ENCODE measurements at regions of chr7 and their contacts with region 1.

Region 1: DNA sequence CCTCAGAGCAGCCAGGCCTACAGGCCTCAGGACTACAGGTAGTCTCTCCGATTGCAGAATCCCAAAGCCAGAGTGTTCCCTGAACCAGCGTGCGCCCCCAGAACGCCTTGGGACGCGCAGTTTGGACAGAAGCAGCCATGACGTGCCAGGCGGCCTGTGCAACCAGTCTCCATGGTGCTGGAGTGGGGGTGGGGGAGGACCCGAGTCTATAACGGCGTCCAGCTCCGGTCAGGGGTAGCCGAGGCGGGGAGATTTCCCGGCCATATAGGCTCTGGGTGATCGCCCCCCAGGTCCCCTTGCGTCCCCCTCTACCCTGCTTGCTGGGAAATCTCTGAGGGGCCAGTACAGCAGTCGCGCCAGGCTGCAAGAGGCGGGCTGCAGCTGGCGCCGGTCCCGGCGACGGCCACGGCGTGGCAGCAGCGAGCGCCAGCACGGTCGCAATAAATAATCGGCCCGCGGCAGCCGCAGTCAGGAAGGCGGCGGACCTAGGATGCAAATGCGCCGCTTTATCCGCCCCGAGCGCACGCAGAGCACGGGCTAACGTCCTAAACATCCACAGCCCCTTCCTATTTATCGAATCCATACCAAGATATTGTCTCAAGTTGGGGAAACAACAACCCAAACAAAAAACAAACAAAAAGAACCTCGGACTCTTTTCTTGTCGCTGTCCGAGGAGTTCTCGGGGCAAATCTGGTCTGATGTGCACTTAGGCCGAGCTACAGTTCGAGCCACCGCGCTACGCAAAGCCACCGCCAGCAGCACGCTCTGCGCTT is 1.6 kb downstream of the HOXA3 start:
- DNase-seq: peak; percentile 72 to 87 (median 87)
- ATAC-seq: peak; percentile 75 to 83
- H3K4me3 ChIP-seq: peak overlapping the region; percentile 5
- H3K27ac ChIP-seq: no peak overlapping the region
- H3K4me1 ChIP-seq: peaks cover 5% of the 10 kb centered on the region
- H3K27me3 ChIP-seq: no peaks in the 10 kb centered on the region

Region 2: GRCh38 chr7:25877802-25878789 is 1272.7 kb before region 1 on chr7:
- intact Hi-C with region 1: loop called in 1 of 4 experiments (anchors 10 kb)
- DNase-seq: no peak
- ATAC-seq: no peak
- H3K4me3 ChIP-seq: no peak overlapping the region
- H3K27ac ChIP-seq: no peak overlapping the region
- H3K4me1 ChIP-seq: no peaks in the 10 kb centered on the region
- H3K27me3 ChIP-seq: peaks cover 6% of the 10 kb centered on the region

Region 3: GRCh38 chr7:26376175-26376917 is 774.4 kb before region 1 on chr7:
- intact Hi-C with region 1: loop called in 1 of 4 experiments (anchors 10 kb)
- DNase-seq: peak in 2 of 3 donors; percentile 53 to 65
- ATAC-seq: peak; percentile 68 to 80
- H3K4me3 ChIP-seq: peak overlapping the region; percentile 39
- H3K27ac ChIP-seq: no peak overlapping the region
- H3K4me1 ChIP-seq: no peaks in the 10 kb centered on the region
- H3K27me3 ChIP-seq: no peaks in the 10 kb centered on the region

Region 4: GRCh38 chr7:26813432-26813831 is 337.3 kb before region 1 on chr7:
- intact Hi-C with region 1: no loop called
- DNase-seq: no peak
- ATAC-seq: no peak
- H3K4me3 ChIP-seq: no peak overlapping the region
- H3K27ac ChIP-seq: no peak overlapping the region
- H3K4me1 ChIP-seq: no peaks in the 10 kb centered on the region
- H3K27me3 ChIP-seq: no peaks in the 10 kb centered on the region

Region 5: DNA sequence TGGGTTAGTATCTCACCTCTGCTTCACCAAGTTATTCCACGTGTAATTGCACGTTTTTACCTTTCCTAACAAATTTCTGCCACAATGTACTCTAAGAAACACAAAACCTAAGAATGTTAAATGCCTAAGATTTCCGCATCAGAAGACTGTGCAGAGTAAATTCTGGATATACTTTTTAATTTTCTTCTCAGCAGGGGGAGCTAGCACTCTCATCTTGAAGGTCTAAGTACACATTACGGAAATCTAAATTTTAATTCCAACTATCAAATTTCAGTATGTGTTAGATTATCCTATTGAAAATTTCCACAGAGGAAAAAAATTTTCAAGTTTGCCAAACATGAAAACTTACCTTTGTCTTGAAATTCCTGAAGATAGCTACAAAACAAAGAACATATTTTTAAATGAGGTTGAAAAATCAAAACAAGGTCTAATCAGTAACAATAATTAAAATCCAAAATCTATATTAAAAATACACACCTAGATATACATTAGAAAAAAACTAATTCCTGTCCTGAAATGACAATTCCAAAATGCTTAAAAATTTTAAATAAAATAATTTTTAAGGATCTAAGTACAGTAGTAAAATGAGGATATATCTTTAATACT is 296.9 kb before region 1 on chr7:
- intact Hi-C with region 1: loop called in 1 of 4 experiments (anchors 5 kb)
- DNase-seq: no peak
- ATAC-seq: no peak
- H3K4me3 ChIP-seq: no peak overlapping the region
- H3K27ac ChIP-seq: no peak overlapping the region
- H3K4me1 ChIP-seq: no peaks in the 10 kb centered on the region
- H3K27me3 ChIP-seq: no peaks in the 10 kb centered on the region

Region 6: GRCh38 chr7:26864309-26865093 is 286.3 kb before region 1 on chr7 and contains the start of gene SKAP2:
- intact Hi-C with region 1: loop called in 1 of 4 experiments (anchors 10 kb)
- DNase-seq: peak; percentile 99
- ATAC-seq: peak; percentile 100
- H3K4me3 ChIP-seq: peak within 1 kb of the TSS; percentile 65
- H3K27ac ChIP-seq: peak within 1 kb of the TSS; percentile 71
- H3K4me1 ChIP-seq: no peaks in the 10 kb centered on the region
- H3K27me3 ChIP-seq: no peaks in the 10 kb centered on the region
- total RNA-seq, gene SKAP2: 9.2 to 13.9 (median 11.8) TPM

Region 7: GRCh38 chr7:27066148-27066547 is 84.6 kb before region 1 on chr7:
- intact Hi-C with region 1: no loop called
- DNase-seq: no peak
- ATAC-seq: no peak
- H3K4me3 ChIP-seq: no peak overlapping the region
- H3K27ac ChIP-seq: no peak overlapping the region
- H3K4me1 ChIP-seq: no peaks in the 10 kb centered on the region
- H3K27me3 ChIP-seq: no peaks in the 10 kb centered on the region

Region 8: GRCh38 chr7:27520815-27521790 is 370.3 kb after region 1 on chr7:
- intact Hi-C with region 1: no loop called
- DNase-seq: peak in 2 of 3 donors; percentile 59 to 79
- ATAC-seq: peak; percentile 71 to 75
- H3K4me3 ChIP-seq: no peak overlapping the region
- H3K27ac ChIP-seq: no peak overlapping the region
- H3K4me1 ChIP-seq: no peaks in the 10 kb centered on the region
- H3K27me3 ChIP-seq: no peaks in the 10 kb centered on the region